Heart left ventricle (tissue), 16 donors: ENCODE measurements at regions of chr20 and their contacts with region 1.

Region 1: DNA sequence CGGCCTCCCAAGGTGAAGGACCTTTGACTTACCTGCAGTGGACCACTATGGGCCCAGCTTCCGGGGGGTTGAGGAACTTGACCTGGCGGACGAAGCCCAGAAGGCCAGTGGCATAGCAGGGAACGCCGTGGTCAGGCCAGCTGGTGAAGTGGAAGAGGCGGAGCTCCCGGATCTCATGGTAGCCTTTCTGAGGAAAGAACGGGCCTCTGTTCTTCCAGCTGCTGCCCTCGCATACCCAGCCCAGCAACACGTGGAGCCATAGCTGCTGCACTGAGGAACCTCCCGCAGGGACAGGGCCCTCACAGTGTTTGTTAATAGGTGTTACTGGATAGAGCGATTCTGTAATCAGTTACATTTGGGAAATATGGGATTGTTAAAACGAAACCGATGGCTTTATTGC is 492.1 kb upstream of the CHD6 start:
- DNase-seq: no peak
- ATAC-seq: no peak
- H3K4me3 ChIP-seq: no peak overlapping the region
- H3K27ac ChIP-seq: peak overlapping the region in 1 of 12 donors; percentile 33
- H3K4me1 ChIP-seq: no peaks in the 10 kb centered on the region
- H3K27me3 ChIP-seq: no peaks in the 10 kb centered on the region
- CTCF ChIP-seq: no peak
- POLR2A ChIP-seq: no peak

Region 2: DNA sequence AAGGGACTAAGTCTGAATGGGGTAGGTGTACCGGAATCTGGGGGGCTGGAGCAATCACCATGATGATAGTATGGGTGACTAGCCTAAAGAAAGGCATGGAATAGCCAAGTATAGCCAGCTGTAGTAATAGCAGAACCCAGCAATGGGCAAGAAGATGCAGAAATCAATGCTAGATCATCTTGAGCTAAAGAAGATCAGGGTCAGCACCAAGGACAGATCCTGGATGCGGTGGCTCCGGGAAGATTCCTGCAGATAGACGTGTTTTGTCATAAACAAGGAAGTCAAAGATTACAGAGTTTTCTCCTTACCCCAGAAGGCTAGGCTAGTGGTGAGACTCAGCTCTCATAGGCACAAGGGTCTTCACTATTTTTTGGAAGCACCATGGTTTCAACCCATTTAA is 69.5 kb after region 1 on chr20:
- intact Hi-C with region 1: loop called in 1 of 10 experiments (anchors 10 kb)
- DNase-seq: no peak
- ATAC-seq: no peak
- H3K4me3 ChIP-seq: no peak overlapping the region
- H3K27ac ChIP-seq: no peak overlapping the region
- H3K4me1 ChIP-seq: no peaks in the 10 kb centered on the region
- H3K27me3 ChIP-seq: peaks cover 0 to 9% (median 0%) of the 10 kb centered on the region in 9 donors
- CTCF ChIP-seq: no peak
- POLR2A ChIP-seq: no peak